ENCODE measurements at regions of chr2 and their contacts with region 1.

Region 1: GRCh38 chr2:32627814-32628579 is at the start of gene TTC27:
- DNase-seq: peak; percentile 88 to 98
- H3K4me3 ChIP-seq: peak within 1 kb of the TSS; percentile 63 to 83
- H3K27ac ChIP-seq: peak within 1 kb of the TSS; percentile 70 to 74
- H3K4me1 ChIP-seq: peaks cover 6 to 12% of the 10 kb centered on the region in 2 donors
- H3K27me3 ChIP-seq: no peaks in the 10 kb centered on the region
- CTCF ChIP-seq: no peak
- total RNA-seq, gene TTC27: 118 TPM

Region 2: GRCh38 chr2:32591669-32592463 is 36.1 kb before region 1 on chr2:
- intact Hi-C with region 1: no loop called
- DNase-seq: no peak
- H3K4me3 ChIP-seq: no peak overlapping the region
- H3K27ac ChIP-seq: no peak overlapping the region
- H3K4me1 ChIP-seq: no peaks in the 10 kb centered on the region
- H3K27me3 ChIP-seq: no peaks in the 10 kb centered on the region
- CTCF ChIP-seq: no peak

Region 3: DNA sequence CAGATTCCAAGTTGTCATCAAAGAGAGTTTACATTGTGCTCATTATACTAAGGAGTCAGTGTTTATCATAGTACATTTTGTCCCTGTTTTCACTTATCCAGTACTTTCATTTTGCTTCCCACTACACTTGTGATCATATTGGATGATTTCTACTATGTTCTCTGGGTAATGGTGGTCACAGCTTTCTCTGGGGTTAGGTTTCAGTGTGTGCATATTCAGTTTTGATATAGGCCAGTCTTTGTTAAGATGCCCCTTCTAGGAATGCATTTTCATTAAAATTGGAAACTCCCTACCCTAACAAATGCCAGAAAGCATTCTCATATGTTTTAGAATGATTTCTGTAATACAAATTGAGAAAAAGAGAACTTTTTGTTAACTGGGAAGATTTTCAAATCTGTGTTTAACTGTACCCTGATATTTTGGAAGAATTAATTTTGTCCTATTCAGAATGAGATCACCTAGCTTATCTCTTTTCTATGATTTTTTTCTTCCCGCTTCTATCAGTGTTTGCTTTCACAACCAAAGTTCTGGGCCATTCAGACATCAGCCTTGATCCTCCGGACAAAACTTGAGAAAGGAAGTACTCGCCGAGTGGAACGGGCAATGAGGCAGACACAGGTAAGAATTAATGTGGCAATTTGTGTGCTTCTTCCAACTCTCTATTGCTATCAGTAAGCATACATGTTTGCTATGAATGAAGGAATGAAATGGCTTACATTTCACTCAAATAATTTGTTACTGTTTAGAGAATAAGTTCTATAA is 74.5 kb after region 1 on chr2:
- intact Hi-C with region 1: no loop called
- DNase-seq: no peak
- H3K4me3 ChIP-seq: no peak overlapping the region
- H3K27ac ChIP-seq: peak overlapping the region; percentile 16 to 47
- H3K4me1 ChIP-seq: peaks cover 0 to 4% of the 10 kb centered on the region in 2 donors
- H3K27me3 ChIP-seq: no peaks in the 10 kb centered on the region
- CTCF ChIP-seq: no peak

Region 4: GRCh38 chr2:32715391-32715841 is 87.4 kb after region 1 on chr2:
- intact Hi-C with region 1: loop called (anchors 5 kb)
- DNase-seq: no peak
- H3K4me3 ChIP-seq: no peak overlapping the region
- H3K27ac ChIP-seq: peak overlapping the region; percentile 72 to 80
- H3K4me1 ChIP-seq: peaks cover 14 to 38% of the 10 kb centered on the region in 2 donors
- H3K27me3 ChIP-seq: no peaks in the 10 kb centered on the region
- CTCF ChIP-seq: no peak

Region 5: DNA sequence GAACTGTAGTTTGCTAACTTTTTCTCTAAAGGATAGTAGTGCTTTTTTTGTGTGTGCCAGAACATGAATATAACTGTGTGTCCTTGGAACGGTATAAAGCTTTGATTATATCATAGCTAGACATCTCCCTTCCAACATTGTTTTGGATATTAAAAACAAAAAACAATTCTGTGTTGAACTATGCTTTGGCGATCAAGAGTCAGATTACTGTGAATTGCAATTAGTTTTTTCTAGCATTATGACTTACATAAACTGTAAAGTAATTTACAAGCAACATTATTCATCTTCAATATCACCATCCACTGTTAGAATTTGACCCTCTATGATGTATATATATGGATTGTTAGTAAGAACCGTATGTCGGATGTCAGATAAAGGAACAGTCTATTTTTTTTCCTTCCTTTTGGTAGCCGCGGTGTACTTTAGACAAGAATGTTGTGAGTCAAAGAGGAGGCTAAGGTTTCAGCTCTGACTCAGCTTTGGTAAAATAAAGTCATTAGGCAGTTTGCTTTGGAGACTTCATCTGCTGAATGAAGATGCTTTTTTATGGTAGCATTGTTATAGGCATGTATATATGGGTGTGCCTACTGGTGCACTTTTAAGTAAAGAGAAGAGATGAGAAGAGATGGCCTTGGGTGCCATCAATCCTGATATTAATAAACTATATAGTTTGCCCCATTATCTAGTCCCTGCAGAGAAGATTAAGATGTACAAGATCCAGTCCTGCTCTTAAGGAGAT is 395.2 kb after region 1 on chr2:
- intact Hi-C with region 1: loop called (anchors 10 kb)
- DNase-seq: no peak
- H3K4me3 ChIP-seq: no peak overlapping the region
- H3K27ac ChIP-seq: peak overlapping the region in 1 of 2 donors; percentile 61
- H3K4me1 ChIP-seq: peaks cover 0 to 21% of the 10 kb centered on the region in 2 donors
- H3K27me3 ChIP-seq: no peaks in the 10 kb centered on the region
- CTCF ChIP-seq: no peak

Region 6: DNA sequence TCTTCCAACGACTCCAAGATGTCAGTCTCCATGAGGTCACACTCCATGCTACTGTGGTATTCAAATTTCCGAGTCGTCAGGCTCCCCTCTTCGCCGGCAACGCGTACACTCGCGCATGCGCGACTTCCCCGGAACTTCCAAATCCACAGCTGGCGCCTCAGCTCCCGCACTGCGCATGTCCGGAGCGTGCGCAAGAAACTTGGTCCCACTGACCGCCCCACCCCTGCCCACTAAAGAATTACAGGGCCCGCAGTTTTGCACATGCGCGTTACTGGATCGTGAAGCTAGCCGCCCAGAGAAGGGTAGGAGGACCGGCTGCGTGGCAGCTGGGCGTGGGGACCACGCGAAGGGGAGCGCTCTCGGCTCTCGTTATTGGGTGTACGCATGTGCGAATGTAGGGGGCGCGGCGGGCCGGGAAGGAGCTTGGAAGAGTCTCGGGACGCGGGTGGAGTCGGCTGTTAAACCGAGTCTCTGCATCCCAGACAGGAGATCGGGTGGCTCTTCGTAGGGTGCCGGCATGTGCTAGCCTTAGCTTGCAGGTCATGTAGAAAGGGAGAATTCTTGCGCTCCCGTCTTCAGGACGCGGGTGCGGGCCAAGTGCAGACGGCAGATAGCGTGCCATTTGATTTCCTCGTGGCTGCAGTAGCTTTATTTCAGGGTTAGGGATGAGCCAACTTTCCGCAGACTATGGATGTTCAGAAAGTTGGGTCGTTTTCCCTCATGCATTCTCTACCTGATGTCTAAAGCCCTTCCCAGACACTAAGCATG is 971.4 kb after region 1 on chr2 and contains the start of gene FAM98A:
- intact Hi-C with region 1: loop called (anchors 5 kb)
- DNase-seq: peak; percentile 93 to 99
- H3K4me3 ChIP-seq: peak within 1 kb of the TSS; percentile 67 to 100
- H3K27ac ChIP-seq: peak within 1 kb of the TSS; percentile 80 to 90
- H3K4me1 ChIP-seq: peaks cover 3 to 10% of the 10 kb centered on the region in 2 donors
- H3K27me3 ChIP-seq: no peaks in the 10 kb centered on the region
- CTCF ChIP-seq: no peak
- total RNA-seq, gene FAM98A: 34.8 TPM